Left cardiac atrium (tissue), 4 donors: ENCODE measurements at regions of chr3 and their contacts with region 1.

Region 1: GRCh38 chr3:19543212-19543841 is 390.7 kb downstream of the EFHB start:
- DNase-seq: no peak
- ATAC-seq: peak; percentile 38 to 78

Region 2: DNA sequence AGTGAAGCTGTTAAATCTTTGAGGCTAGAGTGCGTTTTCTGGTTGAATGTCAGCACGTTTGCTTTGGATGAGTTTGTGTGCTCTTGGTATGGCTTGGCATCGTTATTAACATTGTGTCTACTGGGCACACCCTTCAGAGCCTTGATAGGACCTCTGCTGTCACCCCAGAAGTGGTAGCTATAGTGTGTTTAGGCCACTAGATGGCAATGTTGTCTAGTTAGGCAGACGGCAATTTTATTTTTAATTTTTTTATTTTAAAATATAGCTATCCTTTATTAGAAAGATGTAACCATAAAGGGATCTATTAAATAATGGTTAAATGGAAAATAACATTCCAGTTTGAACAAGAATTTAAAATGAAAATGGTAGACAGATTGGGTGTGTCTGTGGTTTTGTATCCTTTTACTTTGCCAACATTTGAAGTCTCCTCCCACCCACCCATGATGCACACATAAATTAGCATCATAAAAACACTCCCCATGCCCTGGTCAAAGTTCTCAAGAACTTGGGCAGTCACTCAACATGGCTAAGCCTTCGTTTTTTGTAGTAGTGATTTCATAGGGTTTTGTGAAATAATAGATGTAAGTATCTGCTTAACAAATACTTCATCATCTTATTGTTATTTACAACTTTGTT is 194.3 kb before region 1 on chr3:
- intact Hi-C with region 1: loop called in 1 of 2 experiments (anchors 5 kb)
- DNase-seq: no peak
- ATAC-seq: no peak

Region 3: GRCh38 chr3:19757773-19758172 is 214.4 kb after region 1 on chr3:
- intact Hi-C with region 1: no loop called
- DNase-seq: no peak
- ATAC-seq: no peak